Activated CD4-positive, alpha-beta memory T cell treated with anti-CD3 and anti-CD28 coated beads for 36 hours (primary cell): ENCODE measurements at regions of chr9 and their contacts with region 1.

Region 1: DNA sequence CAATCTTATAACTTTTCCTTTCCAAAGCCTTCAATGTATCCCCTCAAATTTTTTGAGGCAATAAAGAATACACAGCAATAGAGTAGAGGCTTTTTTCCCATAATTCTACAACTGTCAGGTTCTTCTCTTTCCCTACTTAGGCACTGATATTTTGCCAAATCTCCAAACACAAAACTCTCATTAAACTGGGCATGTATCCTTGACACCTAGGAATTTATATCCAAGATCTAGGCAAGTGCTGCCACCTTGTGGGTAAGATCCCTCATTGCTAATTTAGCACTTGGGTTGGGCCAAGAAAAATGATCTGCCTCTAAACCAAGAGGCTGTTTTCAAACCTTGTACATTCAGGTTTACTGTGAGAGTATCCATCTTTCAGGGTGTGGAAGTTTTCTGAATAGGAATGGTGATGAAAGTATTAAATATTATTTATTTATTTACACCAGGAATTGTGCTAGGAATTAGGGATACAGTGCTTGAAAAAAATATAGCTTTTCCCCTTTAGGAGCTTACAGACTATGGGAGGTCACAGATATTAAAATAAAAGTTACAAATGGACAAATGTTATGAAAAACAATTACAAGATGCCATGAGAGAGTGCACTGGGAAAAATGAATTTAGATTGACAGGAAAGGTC is 17.6 kb downstream of the TSTD2 start:
- DNase-seq: peak; percentile 64
- H3K4me3 Mint-ChIP-seq: no peak overlapping the region
- H3K27ac Mint-ChIP-seq: no peak overlapping the region
- H3K4me1 Mint-ChIP-seq: peaks cover 12% of the 10 kb centered on the region
- H3K27me3 Mint-ChIP-seq: no peaks in the 10 kb centered on the region

Region 2: DNA sequence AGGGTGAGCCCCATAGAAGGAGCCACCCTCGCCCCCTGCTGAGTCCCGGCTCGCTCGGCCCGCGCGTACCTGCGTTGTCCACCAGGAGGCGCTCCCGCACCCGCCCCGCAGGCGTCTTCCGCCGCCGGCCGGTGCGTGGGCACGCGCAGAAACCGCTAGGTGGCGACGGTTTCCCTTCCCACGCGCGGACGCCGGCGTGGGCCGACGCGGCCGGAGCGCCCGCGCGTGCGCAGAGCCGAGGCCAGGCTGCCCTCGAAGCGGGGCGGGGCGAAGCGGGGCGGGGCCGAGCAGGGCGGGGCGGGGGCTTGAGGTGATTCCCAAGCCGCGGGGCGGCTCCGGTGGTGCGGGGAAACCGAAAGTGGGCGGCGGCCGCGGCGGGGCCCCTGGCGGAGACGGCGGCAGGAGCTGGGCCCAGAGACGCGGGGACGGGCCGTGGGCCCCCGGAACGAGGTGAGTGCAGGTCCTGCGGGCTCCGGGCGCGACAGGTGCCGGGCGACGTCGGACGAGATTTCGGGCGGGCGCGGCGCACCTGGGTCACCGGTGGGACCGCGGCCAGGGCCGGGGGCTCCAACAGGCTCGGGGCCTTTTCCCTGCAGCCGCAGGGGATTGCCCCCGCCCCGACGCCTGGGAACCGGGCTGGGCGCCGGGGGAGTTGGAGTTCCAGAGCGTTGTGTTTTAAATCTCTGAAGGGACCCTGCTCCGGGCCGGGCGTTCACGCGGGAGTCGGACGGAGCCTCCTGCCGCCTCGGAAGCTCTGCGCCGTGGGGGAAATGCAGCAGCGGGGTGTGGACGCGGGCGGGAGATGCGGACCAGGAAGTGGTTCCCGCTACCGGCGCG is 203.5 kb before region 1 on chr9 and contains the start of gene TDRD7:
- CTCF ChIA-PET with region 1: interaction called, 29 read pairs
- POLR2A ChIA-PET with region 1: no interaction called
- intact Hi-C with region 1: loop called (anchors 1 kb)
- DNase-seq: peak; percentile 92
- H3K4me3 Mint-ChIP-seq: peak within 1 kb of the TSS; percentile 82
- H3K27ac Mint-ChIP-seq: peak within 1 kb of the TSS; percentile 61
- H3K4me1 Mint-ChIP-seq: peaks cover 23% of the 10 kb centered on the region
- H3K27me3 Mint-ChIP-seq: peaks cover 11% of the 10 kb centered on the region
- total RNA-seq, gene TDRD7: 12.3 to 12.5 TPM

Region 3: DNA sequence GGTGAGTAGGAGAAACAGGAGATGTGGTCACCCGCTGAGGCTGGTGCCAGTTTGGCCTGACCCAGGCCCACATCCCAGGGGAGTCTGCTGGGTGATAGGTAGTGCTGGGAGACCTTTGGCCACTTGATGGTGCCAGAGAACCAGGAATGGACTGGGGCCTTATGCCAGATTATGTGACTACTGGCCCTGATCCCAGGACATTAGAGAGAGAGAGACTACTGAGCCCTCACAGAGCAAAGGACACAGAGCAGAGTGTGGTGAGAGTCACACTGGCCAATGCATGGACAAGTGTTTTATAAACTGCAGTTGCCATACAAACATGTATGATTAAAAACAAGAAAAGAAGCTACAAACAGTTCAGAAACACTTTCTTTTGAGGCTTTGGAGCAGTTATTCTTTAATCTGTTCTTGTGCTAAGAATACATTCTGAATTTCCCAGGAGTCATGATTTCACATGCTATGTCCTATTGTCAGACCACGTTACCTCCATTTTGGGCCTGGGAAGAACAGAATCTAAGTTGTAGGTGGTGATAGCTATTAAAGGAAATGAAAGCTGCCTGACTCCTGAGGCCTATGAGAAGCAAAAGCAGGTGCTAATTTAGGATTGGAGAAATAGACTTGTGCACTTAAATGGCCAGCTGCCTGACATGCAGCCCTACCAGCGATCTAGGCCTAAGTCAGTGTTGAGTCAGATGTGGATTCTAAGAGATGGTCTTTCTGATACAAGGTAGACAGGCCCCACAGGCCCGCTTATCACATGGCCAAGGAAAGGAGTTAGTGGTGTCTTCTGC is 146.7 kb before region 1 on chr9:
- CTCF ChIA-PET with region 1: interaction called, 97 read pairs
- POLR2A ChIA-PET with region 1: no interaction called
- intact Hi-C with region 1: loop called (anchors 1 kb)
- DNase-seq: peak; percentile 63
- H3K4me3 Mint-ChIP-seq: no peak overlapping the region
- H3K27ac Mint-ChIP-seq: no peak overlapping the region
- H3K4me1 Mint-ChIP-seq: no peaks in the 10 kb centered on the region
- H3K27me3 Mint-ChIP-seq: no peaks in the 10 kb centered on the region

Region 4: DNA sequence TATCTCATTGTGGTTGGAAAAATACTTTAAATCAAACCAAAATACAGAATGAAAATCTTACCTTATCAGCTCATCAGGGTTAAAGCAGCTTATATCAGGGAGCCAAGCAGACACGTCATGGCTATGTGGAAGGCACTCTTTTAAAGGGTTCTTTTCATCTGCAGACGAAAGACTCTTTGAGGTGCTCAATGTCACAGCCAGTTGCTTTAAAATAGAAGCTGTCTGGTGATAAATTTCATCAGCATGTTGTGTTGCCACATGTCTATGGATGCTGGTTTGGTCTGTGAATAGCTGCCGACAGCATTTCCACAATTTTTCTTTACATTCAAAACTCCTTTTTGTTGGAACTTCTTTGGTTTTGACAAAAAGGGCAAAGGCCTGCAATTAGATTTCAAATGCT is 10.1 kb after region 1 on chr9:
- CTCF ChIA-PET with region 1: interaction called, 28 read pairs
- POLR2A ChIA-PET with region 1: no interaction called
- intact Hi-C with region 1: no loop called
- DNase-seq: no peak
- H3K4me3 Mint-ChIP-seq: no peak overlapping the region
- H3K27ac Mint-ChIP-seq: no peak overlapping the region
- H3K4me1 Mint-ChIP-seq: peaks cover 11% of the 10 kb centered on the region
- H3K27me3 Mint-ChIP-seq: no peaks in the 10 kb centered on the region

Region 5: GRCh38 chr9:97638666-97639065 is 23.1 kb after region 1 on chr9:
- CTCF ChIA-PET with region 1: interaction called, 28 read pairs
- POLR2A ChIA-PET with region 1: interaction called, 6 read pairs
- intact Hi-C with region 1: no loop called
- DNase-seq: no peak
- H3K4me3 Mint-ChIP-seq: no peak overlapping the region
- H3K27ac Mint-ChIP-seq: no peak overlapping the region
- H3K4me1 Mint-ChIP-seq: peaks cover 53% of the 10 kb centered on the region
- H3K27me3 Mint-ChIP-seq: no peaks in the 10 kb centered on the region